ENCODE measurements at regions of chr4 and their contacts with region 1.

Region 1: DNA sequence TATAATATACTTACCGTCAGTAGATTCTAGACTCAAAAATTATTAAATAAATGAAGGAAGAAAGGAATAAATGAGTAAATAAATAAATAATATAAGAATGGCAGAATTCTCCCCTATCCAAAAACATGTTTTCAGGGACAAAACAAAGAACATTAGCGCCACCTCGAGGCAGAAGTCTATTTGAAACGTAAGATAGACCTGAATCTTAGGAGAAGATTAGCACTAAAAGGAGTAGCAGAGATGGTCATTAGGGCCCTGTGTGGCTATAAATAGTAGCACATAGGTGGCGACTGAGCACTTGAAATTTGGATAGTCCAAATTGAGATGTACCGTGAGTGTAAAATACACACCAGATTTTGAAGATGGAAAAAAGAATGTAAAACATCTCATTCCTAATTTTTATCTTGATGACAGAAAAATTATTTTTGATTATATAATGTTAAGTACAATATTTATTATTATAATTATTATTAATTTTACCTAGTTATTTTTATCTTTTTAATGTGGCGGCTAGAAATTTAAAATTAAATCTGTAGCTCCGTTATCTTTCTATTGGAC is 24.3 kb upstream of the SRD5A3 start:
- DNase-seq: peak in 4 of 5 donors; percentile 70 to 76 (median 72)
- ATAC-seq: peak in 2 of 4 donors; percentile 50 to 59
- H3K4me3 ChIP-seq: no peak overlapping the region
- H3K27ac ChIP-seq: no peak overlapping the region
- H3K4me1 ChIP-seq: peaks cover 0 to 20% (median 3%) of the 10 kb centered on the region in 12 donors
- H3K27me3 ChIP-seq: no peaks in the 10 kb centered on the region
- CTCF ChIP-seq: peak; percentile 46 to 81 (median 72)
- POLR2A ChIP-seq: no peak

Region 2: GRCh38 chr4:54971474-54971950 is 350.3 kb before region 1 on chr4:
- intact Hi-C with region 1: loop called in 8 of 10 experiments (anchors 1 to 5 kb)
- DNase-seq: no peak
- ATAC-seq: peak in 3 of 4 donors; percentile 65 to 85 (median 69)
- H3K4me3 ChIP-seq: no peak overlapping the region
- H3K27ac ChIP-seq: no peak overlapping the region
- H3K4me1 ChIP-seq: peaks cover 0 to 3% (median 0%) of the 10 kb centered on the region in 12 donors
- H3K27me3 ChIP-seq: no peaks in the 10 kb centered on the region
- CTCF ChIP-seq: peak; percentile 58 to 82 (median 74)
- POLR2A ChIP-seq: no peak

Region 3: DNA sequence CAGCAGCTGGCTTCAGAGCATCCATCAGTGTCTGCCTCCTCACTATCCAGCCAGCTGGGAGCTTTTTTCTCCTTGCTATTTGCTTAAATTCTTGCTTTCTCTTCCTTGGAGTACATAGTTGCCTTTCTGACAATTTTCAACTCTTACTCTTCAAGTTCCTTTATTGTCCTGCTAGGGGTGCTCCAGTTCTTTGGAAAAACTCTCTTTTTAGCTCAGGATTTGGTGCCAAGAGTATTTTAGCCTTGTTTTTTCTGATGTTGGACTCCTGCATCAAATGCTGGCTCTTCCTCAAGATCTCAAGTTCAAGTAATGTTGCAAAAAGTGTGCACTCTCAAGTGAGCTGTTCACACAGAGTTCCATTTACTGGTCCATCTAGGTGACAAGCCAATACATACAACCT is 322.8 kb before region 1 on chr4:
- intact Hi-C with region 1: loop called (anchors 2 to 5 kb)
- DNase-seq: no peak
- ATAC-seq: peak in 1 of 4 donors; percentile 74
- H3K4me3 ChIP-seq: no peak overlapping the region
- H3K27ac ChIP-seq: no peak overlapping the region
- H3K4me1 ChIP-seq: peaks cover 0 to 7% (median 2%) of the 10 kb centered on the region in 12 donors
- H3K27me3 ChIP-seq: no peaks in the 10 kb centered on the region
- CTCF ChIP-seq: peak; percentile 25 to 70 (median 58)
- POLR2A ChIP-seq: no peak

Region 4: GRCh38 chr4:55184600-55185523 is 136.9 kb before region 1 on chr4:
- intact Hi-C with region 1: loop called in 3 of 10 experiments (anchors 5 to 10 kb)
- DNase-seq: peak in 3 of 5 donors; percentile 27 to 47 (median 41)
- ATAC-seq: peak; percentile 53 to 72 (median 60)
- H3K4me3 ChIP-seq: no peak overlapping the region
- H3K27ac ChIP-seq: peak overlapping the region in 7 of 12 donors; percentile 7 to 29 (median 20)
- H3K4me1 ChIP-seq: peaks cover 0 to 37% (median 19%) of the 10 kb centered on the region in 12 donors
- H3K27me3 ChIP-seq: no peaks in the 10 kb centered on the region
- CTCF ChIP-seq: peak in 6 of 12 donors; percentile 10 to 39 (median 20)
- POLR2A ChIP-seq: no peak

Region 5: DNA sequence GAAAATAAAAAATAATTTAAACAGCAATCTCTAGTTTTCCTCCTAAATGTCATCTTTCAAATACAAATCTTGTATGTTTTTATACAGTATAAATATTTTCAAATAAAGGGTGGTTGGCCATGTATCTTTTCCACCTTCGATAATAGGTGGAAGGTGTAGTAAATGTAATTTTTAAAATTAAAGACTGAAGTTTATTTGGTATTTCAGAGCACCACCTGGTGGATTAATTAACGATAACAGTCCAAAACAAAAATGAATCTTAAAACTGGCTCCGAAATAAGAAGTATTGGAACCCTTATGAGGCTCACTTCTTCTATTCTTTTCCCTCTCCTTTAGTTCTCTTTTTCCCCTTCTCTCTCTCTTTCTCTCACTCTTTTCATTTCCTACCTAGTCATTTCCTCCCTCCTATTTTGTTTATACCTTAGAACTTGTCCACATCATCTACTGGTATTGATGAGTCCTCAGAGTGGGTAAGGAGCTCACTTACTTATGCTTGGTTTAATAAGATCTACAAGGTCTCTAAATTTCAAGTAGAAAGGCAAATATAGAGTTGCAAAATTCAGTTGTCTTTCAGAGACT is 414.9 kb after region 1 on chr4:
- intact Hi-C with region 1: loop called in 1 of 10 experiments (anchors 10 kb)
- DNase-seq: no peak
- ATAC-seq: no peak
- H3K4me3 ChIP-seq: no peak overlapping the region
- H3K27ac ChIP-seq: no peak overlapping the region
- H3K4me1 ChIP-seq: no peaks in the 10 kb centered on the region
- H3K27me3 ChIP-seq: peaks cover 0 to 12% (median 0%) of the 10 kb centered on the region in 9 donors
- CTCF ChIP-seq: peak in 8 of 12 donors; percentile 10 to 48 (median 36)
- POLR2A ChIP-seq: no peak

Measured in heart left ventricle (tissue), 16 donors.